ENCODE measurements at regions of chr22 and their contacts with region 1.

Region 1: GRCh38 chr22:41780746-41781505 is 19.6 kb upstream of the CCDC134 start:
- DNase-seq: no peak
- H3K4me3 ChIP-seq: no peak overlapping the region
- H3K27ac ChIP-seq: no peak overlapping the region
- H3K4me1 ChIP-seq: peaks cover 7% of the 10 kb centered on the region
- H3K27me3 ChIP-seq: no peaks in the 10 kb centered on the region
- CTCF ChIP-seq: no peak

Region 2: GRCh38 chr22:39894554-39895092 is 1886.3 kb before region 1 on chr22:
- CTCF ChIA-PET with region 1: interaction called, 13 read pairs
- POLR2A ChIA-PET with region 1: no interaction called
- intact Hi-C with region 1: no loop called
- DNase-seq: no peak
- H3K4me3 ChIP-seq: no peak overlapping the region
- H3K27ac ChIP-seq: no peak overlapping the region
- H3K4me1 ChIP-seq: no peaks in the 10 kb centered on the region
- H3K27me3 ChIP-seq: peaks cover 68% of the 10 kb centered on the region
- CTCF ChIP-seq: no peak